ENCODE measurements at regions of chr9 and their contacts with region 1.

Region 1: DNA sequence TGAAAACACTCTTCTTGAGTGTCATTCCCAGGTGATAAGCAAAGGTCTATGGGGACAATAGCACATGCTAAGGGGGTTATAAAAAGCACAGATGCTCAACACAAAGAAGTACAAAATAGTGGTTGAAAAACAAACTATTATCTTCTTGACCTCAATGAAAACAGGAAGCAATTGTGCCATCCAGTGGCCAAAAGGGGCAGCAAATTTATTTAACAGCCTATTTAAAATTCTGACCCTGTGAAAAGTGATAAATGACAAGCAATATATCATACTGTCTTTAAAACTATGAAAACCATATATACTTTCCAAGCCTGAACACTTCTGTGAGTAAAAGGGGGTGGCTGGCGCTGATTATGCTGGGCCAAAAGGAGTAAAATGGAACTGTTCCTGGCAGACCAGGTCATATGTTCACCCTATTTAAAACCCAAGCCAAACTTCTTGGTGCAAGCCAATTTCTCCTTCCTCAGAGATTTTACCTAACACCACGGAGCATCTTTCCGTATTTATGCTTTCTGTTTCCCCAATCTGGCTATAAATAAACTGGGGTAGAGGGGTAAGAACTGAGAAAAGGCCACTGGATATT is 29.7 kb downstream of the TEX10 start:
- DNase-seq: no peak
- H3K4me3 ChIP-seq: no peak overlapping the region
- H3K27ac ChIP-seq: no peak overlapping the region
- H3K27me3 ChIP-seq: no peaks in the 10 kb centered on the region
- CTCF ChIP-seq: peak; percentile 72

Region 2: DNA sequence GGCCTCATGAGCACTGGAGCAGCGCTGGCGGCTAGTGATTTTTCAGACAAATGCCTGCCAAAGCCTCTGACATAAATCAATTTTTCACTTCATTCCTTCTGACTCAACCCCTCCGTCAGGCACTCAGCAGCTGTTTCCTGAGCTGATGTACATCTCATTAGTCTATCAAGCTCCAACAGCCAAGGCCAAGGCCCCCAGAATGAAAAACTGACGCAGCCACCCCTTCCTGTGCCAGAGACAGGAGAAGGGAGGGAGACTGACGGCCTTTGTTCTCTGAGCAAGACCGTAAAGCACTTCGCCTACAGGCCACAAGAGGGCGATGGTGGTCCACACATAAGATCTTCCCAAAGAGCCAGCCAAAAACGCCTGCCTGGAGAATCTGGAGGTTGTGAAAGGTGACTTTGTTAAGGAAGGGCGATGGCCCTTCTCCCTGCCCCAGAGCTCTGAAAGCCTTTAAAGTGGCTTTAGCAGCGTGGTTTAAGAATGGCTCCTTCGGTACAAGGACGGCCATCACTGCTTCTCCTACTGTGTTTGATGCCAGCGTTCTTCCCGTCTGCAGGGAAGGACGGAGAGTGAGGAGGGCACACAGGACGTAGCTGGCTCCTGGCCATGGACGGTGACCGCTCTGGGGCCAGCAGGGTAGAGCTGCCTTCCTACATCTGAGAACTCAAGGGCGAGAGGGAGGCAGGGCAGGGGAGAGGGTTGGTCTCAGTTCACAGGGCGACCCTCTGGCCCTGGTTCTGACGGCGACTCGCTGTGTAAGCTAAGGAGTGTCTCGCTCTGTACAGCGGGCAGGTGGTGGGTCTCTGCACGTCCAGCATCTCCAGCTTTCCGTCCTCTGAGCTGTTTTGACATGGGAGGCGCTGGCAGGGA is 1138.3 kb before region 1 on chr9:
- CTCF ChIA-PET with region 1: interaction called, 24 read pairs
- POLR2A ChIA-PET with region 1: no interaction called
- DNase-seq: peak; percentile 81
- H3K4me3 ChIP-seq: peak overlapping the region; percentile 38
- H3K27ac ChIP-seq: no peak overlapping the region
- H3K27me3 ChIP-seq: peaks cover 10% of the 10 kb centered on the region
- CTCF ChIP-seq: peak; percentile 97

Region 3: DNA sequence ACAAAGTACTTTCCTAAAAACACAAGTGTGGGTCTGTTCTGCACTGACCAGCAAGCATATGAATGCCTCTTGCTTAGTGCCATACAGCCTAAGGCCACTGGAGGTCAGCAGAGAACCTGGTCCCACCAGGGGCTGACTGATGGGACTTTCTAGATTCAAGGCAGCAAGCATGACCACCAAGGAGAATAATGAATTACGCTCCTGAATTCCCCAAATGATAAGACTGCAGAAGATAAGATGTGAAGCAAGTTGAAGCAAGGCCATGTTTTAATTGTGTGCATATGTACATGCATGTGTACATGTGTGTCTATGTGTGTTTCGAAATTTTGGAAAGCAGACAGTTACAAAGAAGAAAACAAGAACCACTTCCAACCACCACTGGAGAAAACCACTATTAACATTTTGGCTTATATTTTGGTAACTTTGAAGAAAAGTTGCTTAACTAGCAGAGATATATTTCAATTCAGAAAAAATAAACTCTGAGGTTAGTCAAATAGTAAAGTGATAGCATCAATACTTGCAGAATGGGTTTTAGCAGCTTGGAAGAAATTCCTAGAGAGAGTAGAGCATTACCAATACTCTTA is 294.8 kb before region 1 on chr9:
- CTCF ChIA-PET with region 1: interaction called, 13 read pairs
- POLR2A ChIA-PET with region 1: no interaction called
- DNase-seq: peak; percentile 49
- H3K4me3 ChIP-seq: no peak overlapping the region
- H3K27ac ChIP-seq: no peak overlapping the region
- H3K27me3 ChIP-seq: no peaks in the 10 kb centered on the region
- CTCF ChIP-seq: peak; percentile 99

Region 4: DNA sequence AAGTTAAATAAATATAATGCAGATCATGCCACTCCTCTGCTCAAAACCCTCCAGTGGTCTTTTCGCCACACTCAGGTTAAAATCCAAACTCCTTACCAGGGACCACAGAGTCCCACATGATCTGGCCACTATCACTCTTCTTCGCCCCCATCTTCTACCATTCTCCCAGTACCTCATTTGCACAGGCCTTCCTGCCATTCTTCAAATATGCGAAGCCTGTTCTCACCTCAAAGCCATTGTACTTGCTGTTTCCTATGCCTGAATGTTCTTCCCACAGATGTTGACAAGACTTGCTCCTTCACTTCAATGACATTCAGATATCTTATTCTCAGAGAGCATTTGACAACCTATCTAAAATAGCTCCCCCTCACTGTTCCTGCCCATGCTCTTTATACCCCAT is 18.8 kb after region 1 on chr9:
- CTCF ChIA-PET with region 1: interaction called, 104 read pairs
- POLR2A ChIA-PET with region 1: no interaction called
- DNase-seq: no peak
- H3K4me3 ChIP-seq: no peak overlapping the region
- H3K27ac ChIP-seq: no peak overlapping the region
- H3K27me3 ChIP-seq: no peaks in the 10 kb centered on the region
- CTCF ChIP-seq: no peak

Region 5: DNA sequence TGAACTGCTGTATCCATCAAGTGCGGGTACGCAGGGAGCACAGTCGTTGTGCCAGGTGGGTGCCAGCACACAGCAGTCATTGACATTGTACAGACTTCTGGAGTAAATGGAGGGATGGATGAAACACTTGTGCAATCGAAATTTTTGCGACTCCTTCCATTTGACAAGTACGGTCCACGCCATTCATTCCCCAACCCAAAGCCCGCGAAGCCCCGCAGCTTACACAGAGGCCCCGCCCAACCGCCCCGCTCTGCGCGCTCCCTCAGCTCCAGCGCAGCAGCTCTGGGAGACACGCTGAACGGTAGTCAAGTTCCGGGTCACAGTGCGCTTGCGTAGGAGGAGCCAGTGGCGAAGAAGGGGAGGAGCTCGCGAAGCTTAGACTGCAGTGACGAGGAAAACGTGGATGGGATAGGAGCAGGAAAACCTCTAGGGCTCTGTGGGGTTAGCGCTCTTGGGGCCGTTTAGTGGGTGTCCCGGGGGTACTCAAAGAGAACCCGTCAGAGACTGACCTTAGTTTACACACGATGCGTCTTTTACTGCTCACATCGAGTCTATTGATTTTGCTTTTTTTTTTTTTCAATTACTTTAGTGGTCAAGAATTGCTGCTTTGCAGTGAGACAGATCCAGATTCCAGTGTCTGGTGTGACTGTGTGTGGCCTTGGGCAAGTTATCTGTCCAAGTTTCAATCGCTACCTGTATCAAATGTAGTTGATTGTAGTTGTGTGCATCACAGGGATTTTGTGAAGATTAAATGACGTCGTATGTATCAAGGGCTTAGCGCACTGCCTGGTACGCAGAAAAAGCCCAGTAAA is 88.6 kb after region 1 on chr9:
- CTCF ChIA-PET with region 1: interaction called, 10 read pairs
- POLR2A ChIA-PET with region 1: no interaction called
- DNase-seq: peak; percentile 61
- H3K4me3 ChIP-seq: peak overlapping the region; percentile 65
- H3K27ac ChIP-seq: no peak overlapping the region
- H3K27me3 ChIP-seq: peaks cover 3% of the 10 kb centered on the region
- CTCF ChIP-seq: no peak

Region 6: GRCh38 chr9:100426530-100427428 is 103.7 kb after region 1 on chr9 and contains the start of gene MSANTD3:
- CTCF ChIA-PET with region 1: interaction called, 13 read pairs
- POLR2A ChIA-PET with region 1: no interaction called
- DNase-seq: no peak
- H3K4me3 ChIP-seq: peak within 1 kb of the TSS; percentile 79
- H3K27ac ChIP-seq: peak within 1 kb of the TSS; percentile 100
- H3K27me3 ChIP-seq: no peaks in the 10 kb centered on the region
- CTCF ChIP-seq: no peak
- polyA plus RNA-seq, gene MSANTD3: 53.6 and 63.1 TPM in 2 replicates

Region 7: DNA sequence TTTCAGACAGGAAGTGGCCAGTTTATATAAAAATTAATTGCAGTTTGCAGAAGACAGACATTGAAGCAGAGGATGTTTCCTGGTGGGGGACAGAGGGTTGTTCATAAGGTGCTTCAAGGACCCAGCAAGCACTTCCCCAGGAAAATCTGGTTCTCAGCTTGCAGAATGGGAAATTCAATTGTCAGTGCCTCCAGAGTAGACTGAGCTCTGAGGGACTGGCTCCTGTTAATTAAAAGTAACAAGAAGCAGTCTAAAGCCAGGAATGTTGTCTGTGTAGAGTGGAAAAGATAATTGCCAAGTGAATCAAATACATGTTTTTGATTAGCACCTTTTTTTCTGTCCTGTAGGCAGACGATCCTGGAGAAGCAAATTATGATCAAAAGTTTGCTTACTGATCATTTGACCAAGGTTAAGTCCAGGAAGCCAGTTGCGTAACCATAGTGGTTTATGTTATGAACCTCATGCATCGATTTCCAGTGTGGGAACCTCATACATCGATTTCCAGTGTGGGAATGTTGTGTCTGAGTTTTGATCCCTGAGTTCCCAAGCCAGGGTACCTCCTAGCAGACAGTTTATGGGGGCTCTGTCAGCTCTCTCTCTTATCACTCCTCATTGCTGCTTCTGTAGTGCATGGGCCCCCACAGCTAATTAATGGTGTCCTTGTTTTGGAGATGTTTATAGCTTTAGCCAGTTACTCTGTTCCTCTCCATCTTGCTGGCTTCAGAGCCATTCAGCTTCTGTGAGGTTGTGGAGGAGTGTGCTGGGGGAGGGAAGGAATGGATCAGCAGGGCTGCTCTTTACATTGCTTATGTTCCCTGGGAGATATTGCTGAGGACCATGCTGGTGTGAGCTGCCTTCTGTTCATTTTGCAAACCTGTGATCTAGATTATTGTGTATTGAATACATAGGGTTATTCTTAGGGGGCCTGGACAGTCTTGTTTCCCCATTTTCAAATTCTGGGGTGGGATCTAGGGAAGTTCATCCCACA is 121.0 kb after region 1 on chr9:
- CTCF ChIA-PET with region 1: interaction called, 14 read pairs
- POLR2A ChIA-PET with region 1: no interaction called
- DNase-seq: no peak
- H3K4me3 ChIP-seq: no peak overlapping the region
- H3K27ac ChIP-seq: no peak overlapping the region
- H3K27me3 ChIP-seq: no peaks in the 10 kb centered on the region
- CTCF ChIP-seq: no peak